HEK293 (cell line): ENCODE measurements at regions of chr17 and their contacts with region 1.

Region 1: GRCh38 chr17:50865984-50866774 is at the start of gene TOB1:
- H3K4me3 ChIP-seq: peak within 1 kb of the TSS; percentile 86
- H3K27ac ChIP-seq: peak within 1 kb of the TSS; percentile 99
- H3K4me1 ChIP-seq: peaks cover 33% of the 10 kb centered on the region
- CTCF ChIP-seq: no peak

Region 2: GRCh38 chr17:50739098-50739497 is 127.1 kb before region 1 on chr17:
- CTCF ChIA-PET with region 1: no interaction called
- POLR2A ChIA-PET with region 1: no interaction called
- H3K4me3 ChIP-seq: no peak overlapping the region
- H3K27ac ChIP-seq: peak overlapping the region; percentile 13; the same call in 1 of the 2 replicates
- H3K4me1 ChIP-seq: peaks cover 7% of the 10 kb centered on the region; the same call in 1 of the 2 replicates
- CTCF ChIP-seq: no peak

Region 3: GRCh38 chr17:50848039-50848438 is 18.1 kb before region 1 on chr17:
- CTCF ChIA-PET with region 1: interaction called, 89 read pairs
- POLR2A ChIA-PET with region 1: interaction called, 52 read pairs
- H3K4me3 ChIP-seq: no peak overlapping the region
- H3K27ac ChIP-seq: no peak overlapping the region
- H3K4me1 ChIP-seq: no peaks in the 10 kb centered on the region
- CTCF ChIP-seq: no peak

Region 4: DNA sequence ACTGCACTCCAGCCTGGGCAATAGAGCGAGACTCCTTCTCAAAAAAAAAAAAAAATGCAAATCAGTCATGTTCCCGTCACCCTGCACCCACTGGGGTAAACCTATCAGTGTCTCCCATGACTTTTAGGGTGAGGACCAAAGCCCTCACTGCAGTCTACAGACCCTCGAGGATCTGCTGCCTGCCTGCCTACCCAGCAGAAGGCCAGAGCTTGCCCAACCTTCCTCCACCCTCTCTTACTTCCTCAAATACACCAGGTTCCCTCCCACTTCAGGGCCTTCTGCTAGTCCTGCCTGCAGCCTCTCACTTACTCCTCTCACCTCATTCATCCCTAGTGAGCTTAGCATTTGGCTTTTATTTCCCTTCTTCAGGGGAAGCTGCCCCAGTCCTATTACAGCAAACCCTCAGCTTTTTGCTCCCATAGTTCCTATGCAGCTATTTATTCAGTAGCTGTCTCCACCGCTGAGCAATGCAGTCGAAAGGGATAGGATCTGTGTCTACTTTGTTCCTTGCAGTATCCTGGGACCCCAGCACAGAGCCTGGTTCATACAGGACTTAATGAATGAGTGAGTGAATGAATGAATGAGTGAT is 17.8 kb after region 1 on chr17:
- CTCF ChIA-PET with region 1: interaction called, 4 read pairs
- POLR2A ChIA-PET with region 1: interaction called, 28 read pairs
- H3K4me3 ChIP-seq: no peak overlapping the region
- H3K27ac ChIP-seq: no peak overlapping the region
- H3K4me1 ChIP-seq: no peaks in the 10 kb centered on the region
- CTCF ChIP-seq: no peak

Region 5: DNA sequence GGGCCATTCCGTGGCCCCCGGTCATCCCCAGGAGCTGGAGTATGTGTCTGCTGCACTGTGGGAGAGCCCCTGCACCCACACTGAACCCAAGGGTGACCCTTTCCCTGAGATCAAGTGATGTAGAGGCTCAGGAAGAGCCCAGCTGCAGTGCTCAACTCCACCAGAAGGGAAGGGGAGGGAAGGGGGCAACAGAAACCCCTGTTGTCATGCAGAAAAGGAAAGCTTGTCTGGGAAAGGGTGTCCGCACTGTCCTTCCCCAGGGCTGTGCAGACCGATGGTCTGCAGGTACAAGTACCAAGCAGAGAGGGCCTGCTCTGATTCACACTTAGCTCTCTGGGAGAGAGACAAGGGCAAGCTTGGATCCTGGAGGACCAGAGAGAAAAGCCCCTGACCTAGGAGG is 45.7 kb after region 1 on chr17:
- CTCF ChIA-PET with region 1: interaction called, 4 read pairs
- POLR2A ChIA-PET with region 1: interaction called, 24 read pairs
- H3K4me3 ChIP-seq: no peak overlapping the region
- H3K27ac ChIP-seq: no peak overlapping the region
- H3K4me1 ChIP-seq: no peaks in the 10 kb centered on the region; the same call in 1 of the 2 replicates
- CTCF ChIP-seq: no peak

Region 6: DNA sequence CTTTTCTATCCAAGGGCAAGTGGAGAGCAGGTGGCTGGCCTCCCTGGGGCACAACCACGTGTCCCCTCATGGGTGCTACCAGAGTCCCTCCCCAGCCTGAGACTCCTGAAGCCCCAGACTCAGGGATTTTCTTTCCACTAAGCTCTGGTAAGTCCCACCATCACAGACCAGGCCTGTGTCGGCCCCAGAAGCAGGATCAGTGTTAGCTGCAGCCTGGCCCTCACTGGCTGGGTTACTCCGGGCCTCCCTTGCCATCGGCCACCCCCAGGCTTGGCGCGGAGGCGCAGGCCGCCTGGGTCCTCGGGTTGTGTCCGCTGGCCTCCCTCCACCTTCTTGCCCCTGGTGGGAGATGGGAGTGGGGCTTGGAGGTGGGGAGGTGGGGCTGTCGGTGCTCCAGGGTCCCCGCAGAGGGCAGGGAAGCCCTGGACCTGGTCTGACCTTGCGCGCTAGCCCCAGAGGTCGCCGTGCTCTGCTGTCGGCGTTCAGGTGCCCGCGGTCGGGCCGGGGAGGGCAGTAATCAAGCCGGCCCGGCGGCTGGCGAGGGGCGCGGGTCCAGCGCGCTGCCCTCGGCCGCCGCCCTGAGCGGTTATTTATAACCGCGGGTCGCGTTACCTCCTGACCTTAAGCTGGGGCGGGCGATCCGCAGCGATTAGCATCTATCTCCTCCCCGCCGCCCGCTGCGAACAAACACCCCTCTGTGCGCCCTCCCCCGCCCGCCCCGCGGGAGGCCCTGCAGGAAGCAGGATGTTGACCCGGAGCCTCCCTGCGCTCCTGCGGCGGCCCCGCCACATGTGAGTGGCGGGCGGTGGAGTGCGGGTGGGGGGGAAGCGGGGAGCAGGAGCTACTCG is 78.1 kb after region 1 on chr17:
- CTCF ChIA-PET with region 1: interaction called, 35 read pairs
- POLR2A ChIA-PET with region 1: interaction called, 61 read pairs
- H3K4me3 ChIP-seq: peak overlapping the region; percentile 18
- H3K27ac ChIP-seq: peak overlapping the region; percentile 71
- H3K4me1 ChIP-seq: peaks cover 8% of the 10 kb centered on the region
- CTCF ChIP-seq: no peak; the same call in 1 of the 2 replicates

Region 7: DNA sequence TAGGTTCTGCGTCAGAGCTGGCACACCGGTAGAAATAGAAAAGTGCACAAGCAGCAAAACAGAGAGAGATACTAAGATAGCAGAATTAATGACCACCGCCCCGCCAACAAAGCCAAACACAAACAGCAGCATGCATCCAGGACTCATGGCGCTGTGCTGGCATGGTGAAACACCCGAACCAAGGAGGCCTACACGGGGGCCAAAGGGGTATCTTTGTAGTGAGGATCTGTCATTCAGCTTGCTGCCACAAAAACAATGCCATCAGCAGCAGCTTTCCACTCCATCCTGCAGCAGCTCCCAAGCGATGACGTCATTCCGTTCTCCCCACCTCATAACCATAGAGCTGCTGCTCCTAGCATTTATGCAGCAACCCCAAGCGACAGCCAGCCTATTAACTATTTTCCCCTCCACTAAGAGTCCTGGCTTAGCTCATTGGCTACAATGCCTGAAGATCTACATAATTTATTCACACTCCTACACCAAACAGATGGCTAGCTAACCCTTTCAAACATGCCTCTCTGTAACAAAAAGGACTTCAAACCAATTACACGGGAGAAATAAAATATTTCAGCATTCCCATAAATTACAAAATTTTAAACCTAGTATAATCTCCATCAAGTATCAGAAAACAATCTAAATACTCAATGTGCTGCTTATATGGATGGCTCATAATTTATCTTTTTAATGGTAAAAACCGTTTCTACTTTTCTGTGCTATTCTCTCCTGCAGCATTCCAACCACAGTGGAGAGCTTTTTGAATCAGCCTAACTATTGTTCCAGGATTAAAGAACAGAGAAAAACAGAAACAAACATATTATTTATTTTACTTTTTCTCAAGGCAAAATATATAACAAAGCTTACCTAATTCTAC is 180.6 kb after region 1 on chr17:
- CTCF ChIA-PET with region 1: interaction called, 3 read pairs
- POLR2A ChIA-PET with region 1: interaction called, 14 read pairs
- H3K4me3 ChIP-seq: peak overlapping the region; percentile 6
- H3K27ac ChIP-seq: peak overlapping the region; percentile 52
- H3K4me1 ChIP-seq: peaks cover 15% of the 10 kb centered on the region
- CTCF ChIP-seq: no peak